Left ventricle myocardium superior (tissue), 1 donor: ENCODE measurements at regions of chr7 and their contacts with region 1.

Region 1: DNA sequence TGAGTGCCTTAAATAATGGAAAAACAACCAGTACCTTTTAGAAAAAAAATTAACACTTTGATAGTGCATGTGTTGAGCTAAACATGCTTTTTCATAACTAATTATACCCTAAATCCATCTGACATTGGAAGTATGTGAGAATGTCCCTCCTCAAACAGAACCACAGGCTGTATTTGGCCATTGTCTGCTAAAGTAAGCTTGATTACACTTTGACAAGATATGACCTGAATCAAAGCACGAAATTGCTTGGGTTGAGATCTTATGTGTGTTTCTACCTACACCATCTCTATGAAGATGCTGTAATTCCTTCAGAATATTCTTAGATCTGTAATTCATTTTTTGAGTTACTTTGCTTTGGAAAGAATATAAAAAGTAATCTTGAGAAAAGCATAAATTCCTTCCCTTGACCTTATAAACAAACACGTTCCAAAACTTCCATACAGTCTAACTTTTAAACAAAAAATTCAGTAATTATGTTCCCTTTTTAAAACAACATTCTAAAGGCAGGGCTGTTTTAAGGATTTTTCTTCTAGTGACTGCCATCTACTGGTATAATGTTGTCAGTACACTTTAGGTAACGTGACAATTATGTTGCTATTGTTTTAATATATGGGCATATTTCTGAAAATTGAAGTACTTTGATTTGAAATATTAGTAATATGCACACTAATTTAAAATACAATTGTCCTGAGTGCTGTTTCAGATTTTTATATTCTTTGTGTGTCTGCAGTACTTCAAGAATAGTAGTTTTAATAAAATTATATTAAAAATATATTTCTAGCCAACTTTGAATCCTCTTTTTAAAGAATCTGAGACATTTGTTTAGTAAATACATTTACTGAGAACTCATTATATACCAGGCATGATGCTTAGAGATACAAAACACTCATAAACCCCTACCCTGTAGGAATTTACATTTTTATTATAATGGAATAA is 20.9 kb downstream of the CD36 start:
- DNase-seq: no peak
- ATAC-seq: no peak

Region 2: GRCh38 chr7:80428161-80429054 is 231.0 kb before region 1 on chr7:
- intact Hi-C with region 1: loop called (anchors 5 kb)
- DNase-seq: no peak
- ATAC-seq: peak; percentile 88

Region 3: GRCh38 chr7:80467069-80467468 is 192.3 kb before region 1 on chr7:
- intact Hi-C with region 1: loop called (anchors 10 kb)
- DNase-seq: no peak
- ATAC-seq: peak; percentile 90

Region 4: GRCh38 chr7:80941208-80941758 is 281.9 kb after region 1 on chr7:
- intact Hi-C with region 1: no loop called
- DNase-seq: no peak
- ATAC-seq: peak; percentile 72